ENCODE measurements at regions of chr1 and their contacts with region 1.

Region 1: GRCh38 chr1:65687428-65688214 is 105.1 kb upstream of the PDE4B start:
- DNase-seq: peak; percentile 82
- ATAC-seq: peak; percentile 96
- H3K4me3 Mint-ChIP-seq: no peak overlapping the region
- H3K27ac Mint-ChIP-seq: peak overlapping the region; percentile 13
- H3K4me1 Mint-ChIP-seq: peaks cover 15% of the 10 kb centered on the region
- H3K27me3 Mint-ChIP-seq: peaks cover 35% of the 10 kb centered on the region

Region 2: DNA sequence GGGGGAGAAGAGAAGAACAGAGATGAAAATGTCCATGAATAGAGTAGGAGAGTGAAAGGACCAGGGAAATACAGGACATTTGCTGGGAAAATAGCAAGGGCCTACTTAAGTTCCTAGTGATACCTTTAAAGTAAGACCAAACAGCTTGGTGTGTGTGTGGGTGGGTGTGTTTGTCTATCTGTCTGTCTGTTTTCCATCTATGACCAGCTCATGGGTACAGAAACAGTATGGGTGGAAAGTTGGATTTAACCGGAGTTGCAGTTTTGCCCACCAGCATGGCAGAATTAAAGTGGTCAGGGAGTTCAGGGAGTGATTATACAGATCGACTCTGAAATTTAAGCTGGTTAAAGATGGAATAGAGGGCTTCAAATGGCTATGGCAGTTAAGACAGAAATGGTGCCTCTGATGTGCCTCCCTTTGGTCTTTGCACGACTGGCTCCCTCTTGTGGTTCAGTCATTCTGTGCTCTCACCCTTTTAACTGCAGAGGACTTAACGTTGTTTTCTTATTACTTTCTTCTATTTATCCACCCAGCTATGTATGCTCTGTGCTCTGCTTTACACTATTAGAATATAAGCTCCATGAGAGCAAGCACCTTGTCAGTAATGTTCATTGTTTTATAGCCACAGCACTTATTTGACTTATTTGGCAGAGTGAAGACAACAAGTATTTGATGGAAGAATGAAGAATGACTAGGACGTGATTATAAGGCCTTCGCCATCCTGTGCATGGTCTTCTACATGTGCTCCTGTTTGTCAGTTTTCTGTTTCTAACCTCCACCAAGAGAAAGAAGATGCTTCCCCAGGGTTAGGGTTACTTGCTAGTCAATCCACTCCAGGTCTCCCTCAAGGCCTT is 612.3 kb before region 1 on chr1:
- CTCF ChIA-PET with region 1: interaction called, 10 read pairs
- DNase-seq: peak; percentile 79
- ATAC-seq: peak; percentile 98
- H3K4me3 Mint-ChIP-seq: no peak overlapping the region
- H3K27ac Mint-ChIP-seq: no peak overlapping the region
- H3K4me1 Mint-ChIP-seq: peaks cover 11% of the 10 kb centered on the region
- H3K27me3 Mint-ChIP-seq: peaks cover 8% of the 10 kb centered on the region

Region 3: GRCh38 chr1:65235867-65236805 is 451.5 kb before region 1 on chr1:
- CTCF ChIA-PET with region 1: interaction called, 40 read pairs
- DNase-seq: no peak
- ATAC-seq: no peak
- H3K4me3 Mint-ChIP-seq: no peak overlapping the region
- H3K27ac Mint-ChIP-seq: no peak overlapping the region
- H3K4me1 Mint-ChIP-seq: peaks cover 16% of the 10 kb centered on the region
- H3K27me3 Mint-ChIP-seq: peaks cover 11% of the 10 kb centered on the region

Region 4: GRCh38 chr1:65431111-65431705 is 256.4 kb before region 1 on chr1:
- CTCF ChIA-PET with region 1: interaction called, 27 read pairs
- DNase-seq: no peak
- ATAC-seq: no peak
- H3K4me3 Mint-ChIP-seq: no peak overlapping the region
- H3K27ac Mint-ChIP-seq: no peak overlapping the region
- H3K4me1 Mint-ChIP-seq: peaks cover 20% of the 10 kb centered on the region
- H3K27me3 Mint-ChIP-seq: no peaks in the 10 kb centered on the region

Region 5: GRCh38 chr1:65703853-65704252 is 16.2 kb after region 1 on chr1:
- CTCF ChIA-PET with region 1: interaction called, 10 read pairs
- DNase-seq: no peak
- ATAC-seq: no peak
- H3K4me3 Mint-ChIP-seq: no peak overlapping the region
- H3K27ac Mint-ChIP-seq: no peak overlapping the region
- H3K4me1 Mint-ChIP-seq: no peaks in the 10 kb centered on the region
- H3K27me3 Mint-ChIP-seq: peaks cover 54% of the 10 kb centered on the region